CD4-positive, alpha-beta T cell (primary cell): ENCODE measurements at regions of chr19 and their contacts with region 1.

Region 1: DNA sequence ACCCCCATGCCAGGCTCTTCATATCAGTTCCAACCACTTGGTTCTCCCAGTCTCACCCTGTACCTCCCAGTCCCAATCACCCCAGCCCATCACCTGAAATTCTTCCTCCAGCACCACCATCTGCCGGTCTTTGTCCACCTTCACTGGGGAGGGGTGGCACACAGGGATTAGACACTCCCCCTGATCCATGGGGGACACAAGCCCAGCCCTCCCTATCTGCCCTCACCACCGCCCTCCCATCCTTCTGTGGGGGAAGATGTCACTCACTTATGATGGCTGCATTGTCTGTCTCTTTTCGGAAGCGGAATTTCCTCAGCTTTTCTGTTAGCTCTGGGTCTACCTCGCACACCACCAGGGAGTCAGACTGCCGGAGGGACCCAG is 685 bp downstream of the GMFG start:
- DNase-seq: peak in 8 of 14 experiments; percentile 10 to 63 (median 32)
- ATAC-seq: peak; percentile 45
- H3K4me3 ChIP-seq: peak overlapping the region; percentile 99
- H3K4me3 Mint-ChIP-seq: peak overlapping the region; percentile 98
- H3K27ac ChIP-seq: peak overlapping the region; percentile 93 to 94
- H3K27ac Mint-ChIP-seq: peak overlapping the region; percentile 95
- H3K4me1 ChIP-seq: peaks cover 76% of the 10 kb centered on the region
- H3K4me1 Mint-ChIP-seq: peaks cover 65% of the 10 kb centered on the region
- H3K27me3 ChIP-seq: no peaks in the 10 kb centered on the region
- H3K27me3 Mint-ChIP-seq: no peaks in the 10 kb centered on the region
- CTCF ChIP-seq: no peak

Region 2: DNA sequence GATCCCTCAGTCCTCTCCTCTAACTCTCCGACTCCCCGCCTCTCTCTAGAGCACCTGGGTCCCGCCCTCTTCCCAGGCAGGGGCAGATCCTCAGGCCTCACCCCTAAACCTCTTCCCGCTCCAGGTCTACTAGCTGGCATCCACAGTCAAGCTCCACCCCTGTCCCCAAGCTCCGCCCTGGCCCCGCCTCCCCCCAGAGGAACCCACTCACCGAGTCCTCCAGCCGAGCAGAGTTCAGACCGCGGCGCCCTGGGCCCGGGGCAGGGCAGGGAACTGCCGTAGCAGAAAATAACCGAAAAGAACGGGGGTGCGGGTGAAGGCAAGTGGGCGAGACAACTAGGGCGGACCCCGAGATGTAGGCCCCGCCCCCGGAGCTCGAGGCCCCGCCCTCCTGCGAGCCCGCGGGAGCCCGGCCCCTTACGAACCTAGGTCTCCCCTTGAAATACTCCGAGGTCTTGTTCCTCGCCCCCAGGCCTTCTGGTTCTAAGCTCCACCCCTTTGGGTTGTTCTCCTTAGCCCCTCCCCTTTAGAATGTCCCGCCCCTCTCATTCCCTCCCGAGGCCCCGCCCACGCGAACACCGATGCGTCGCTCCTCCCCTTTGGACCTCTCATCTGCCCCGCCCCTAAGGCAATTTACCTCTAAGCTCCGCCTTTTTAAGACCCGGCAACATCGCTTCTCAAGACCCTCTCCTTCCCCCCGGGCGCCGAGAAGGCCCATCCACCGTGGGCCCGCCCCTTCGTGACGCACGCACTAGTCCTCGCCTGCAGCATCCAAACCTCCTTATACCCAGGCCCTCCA is 947.4 kb before region 1 on chr19 and contains the start of gene GGN:
- CTCF ChIA-PET with region 1: no interaction called
- POLR2A ChIA-PET with region 1: no interaction called
- intact Hi-C with region 1: loop called in 1 of 2 experiments (anchors 10 kb)
- DNase-seq: peak; percentile 59 to 91 (median 75)
- ATAC-seq: peak; percentile 74
- H3K4me3 ChIP-seq: peak within 1 kb of the TSS; percentile 58
- H3K4me3 Mint-ChIP-seq: peak within 1 kb of the TSS; percentile 94
- H3K27ac ChIP-seq: no peak within 1 kb of the TSS
- H3K27ac Mint-ChIP-seq: peak within 1 kb of the TSS; percentile 70
- H3K4me1 ChIP-seq: peaks cover 44% of the 10 kb centered on the region
- H3K4me1 Mint-ChIP-seq: peaks cover 29% of the 10 kb centered on the region
- H3K27me3 ChIP-seq: peaks cover 17 to 18% of the 10 kb centered on the region in 2 experiments
- H3K27me3 Mint-ChIP-seq: peaks cover 39% of the 10 kb centered on the region
- CTCF ChIP-seq: no peak
- total RNA-seq, gene GGN: 0.17 to 0.19 TPM

Region 3: DNA sequence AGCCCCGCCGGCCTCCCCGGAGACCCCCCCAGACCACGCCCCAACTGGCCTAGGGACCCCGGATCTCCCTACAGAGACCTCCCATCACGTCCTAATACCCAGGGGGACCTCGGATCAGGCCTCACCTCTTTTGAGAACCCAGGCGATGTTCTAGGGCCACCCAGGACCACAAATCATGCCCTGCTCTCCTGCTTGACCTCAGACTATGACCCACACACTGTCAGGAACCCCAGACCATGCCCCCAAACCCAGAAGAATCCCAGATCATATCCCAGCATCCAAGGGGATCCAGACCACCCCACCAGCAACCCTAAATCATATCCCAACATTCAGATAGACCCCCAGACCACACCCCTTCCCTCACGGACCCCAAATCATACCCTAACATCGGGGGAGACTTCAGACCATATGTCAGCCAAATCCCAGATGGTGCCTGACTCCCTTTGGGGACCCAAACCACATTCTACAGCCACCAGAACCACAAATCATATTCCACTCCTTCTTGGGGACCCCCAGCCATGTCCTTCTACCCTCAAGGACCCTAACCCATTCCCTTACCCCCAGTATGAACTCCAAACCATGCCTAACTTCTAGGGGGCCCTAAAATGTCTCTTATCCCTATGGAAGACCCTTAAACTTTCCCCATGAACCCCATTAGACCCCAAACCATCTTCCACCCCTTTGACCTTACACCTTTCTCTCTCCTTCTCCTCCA is 13.9 kb before region 1 on chr19:
- CTCF ChIA-PET with region 1: no interaction called
- POLR2A ChIA-PET with region 1: interaction called, 17 read pairs
- intact Hi-C with region 1: no loop called
- DNase-seq: no peak
- ATAC-seq: no peak
- H3K4me3 ChIP-seq: no peak overlapping the region
- H3K4me3 Mint-ChIP-seq: peak overlapping the region; percentile 91
- H3K27ac ChIP-seq: peak overlapping the region; percentile 33 to 43
- H3K27ac Mint-ChIP-seq: peak overlapping the region; percentile 83
- H3K4me1 ChIP-seq: peaks cover 18% of the 10 kb centered on the region
- H3K4me1 Mint-ChIP-seq: peaks cover 36% of the 10 kb centered on the region
- H3K27me3 ChIP-seq: no peaks in the 10 kb centered on the region
- H3K27me3 Mint-ChIP-seq: no peaks in the 10 kb centered on the region
- CTCF ChIP-seq: no peak

Region 4: GRCh38 chr19:39352381-39353255 is 17.5 kb after region 1 on chr19:
- CTCF ChIA-PET with region 1: no interaction called
- POLR2A ChIA-PET with region 1: no interaction called
- intact Hi-C with region 1: no loop called
- DNase-seq: no peak
- ATAC-seq: no peak
- H3K4me3 ChIP-seq: no peak overlapping the region
- H3K4me3 Mint-ChIP-seq: no peak overlapping the region
- H3K27ac ChIP-seq: no peak overlapping the region
- H3K27ac Mint-ChIP-seq: no peak overlapping the region
- H3K4me1 ChIP-seq: no peaks in the 10 kb centered on the region
- H3K4me1 Mint-ChIP-seq: peaks cover 30% of the 10 kb centered on the region
- H3K27me3 ChIP-seq: no peaks in the 10 kb centered on the region
- H3K27me3 Mint-ChIP-seq: no peaks in the 10 kb centered on the region
- CTCF ChIP-seq: no peak

Region 5: GRCh38 chr19:39390755-39391592 is 55.8 kb after region 1 on chr19 and contains the starts of genes MED29 and PAF1:
- CTCF ChIA-PET with region 1: no interaction called
- POLR2A ChIA-PET with region 1: interaction called, 20 read pairs
- intact Hi-C with region 1: loop called in 1 of 2 experiments (anchors 2 kb)
- DNase-seq: peak; percentile 91 to 100 (median 94)
- ATAC-seq: peak; percentile 90
- H3K4me3 ChIP-seq: peak within 1 kb of the TSS; percentile 91
- H3K4me3 Mint-ChIP-seq: peak within 1 kb of the TSS; percentile 90
- H3K27ac ChIP-seq: peak within 1 kb of the TSS; percentile 98 to 100
- H3K27ac Mint-ChIP-seq: peak within 1 kb of the TSS; percentile 96
- H3K4me1 ChIP-seq: peaks cover 44% of the 10 kb centered on the region
- H3K4me1 Mint-ChIP-seq: peaks cover 33% of the 10 kb centered on the region
- H3K27me3 ChIP-seq: no peaks in the 10 kb centered on the region
- H3K27me3 Mint-ChIP-seq: no peaks in the 10 kb centered on the region
- CTCF ChIP-seq: no peak
- total RNA-seq, gene MED29: 45.0 to 46.1 TPM
- total RNA-seq, gene PAF1: 99.6 to 101 TPM

Region 6: DNA sequence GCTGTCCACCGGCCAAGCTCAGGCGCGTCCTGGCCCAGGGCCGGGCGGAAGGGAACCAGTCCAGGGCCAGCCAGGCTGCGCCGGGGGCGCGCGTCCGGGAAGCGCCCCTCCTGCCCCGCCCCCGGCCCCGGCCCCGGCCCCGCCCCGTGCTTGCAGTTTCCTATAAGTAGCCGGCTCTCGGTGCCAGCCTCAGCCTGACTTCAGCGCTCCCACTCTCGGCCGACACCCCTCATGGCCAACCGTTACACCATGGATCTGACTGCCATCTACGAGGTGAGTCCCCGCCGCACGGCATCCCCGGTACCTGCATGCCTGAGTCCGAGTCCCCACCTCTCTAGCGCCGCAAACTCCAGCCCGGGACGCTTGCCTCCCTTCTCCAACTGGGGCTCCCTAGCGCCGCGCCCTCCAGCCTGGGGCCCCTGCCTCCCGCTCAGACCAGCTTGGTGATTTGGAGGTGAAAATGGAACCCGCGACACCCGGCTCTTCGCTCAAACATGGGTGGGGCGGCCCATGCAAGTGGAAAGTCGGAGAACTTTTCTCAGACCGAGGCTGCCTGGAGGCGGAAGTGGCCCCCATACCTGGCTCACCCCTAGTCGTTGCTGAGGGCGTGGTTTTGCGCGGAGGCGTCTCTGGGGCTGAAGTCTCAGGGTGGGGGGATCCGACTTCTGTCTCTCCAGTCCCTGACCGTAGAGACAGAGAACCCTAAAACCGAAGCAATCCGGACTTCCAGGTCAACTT is 71.7 kb after region 1 on chr19 and contains the start of gene ZFP36:
- CTCF ChIA-PET with region 1: interaction called, 3 read pairs
- POLR2A ChIA-PET with region 1: interaction called, 14 read pairs
- intact Hi-C with region 1: loop called in 1 of 2 experiments (anchors 2 kb)
- DNase-seq: peak; percentile 80 to 95 (median 91)
- ATAC-seq: peak; percentile 11
- H3K4me3 ChIP-seq: peak within 1 kb of the TSS; percentile 100
- H3K4me3 Mint-ChIP-seq: peak within 1 kb of the TSS; percentile 99
- H3K27ac ChIP-seq: peak within 1 kb of the TSS; percentile 100
- H3K27ac Mint-ChIP-seq: peak within 1 kb of the TSS; percentile 98
- H3K4me1 ChIP-seq: peaks cover 85% of the 10 kb centered on the region
- H3K4me1 Mint-ChIP-seq: peaks cover 56% of the 10 kb centered on the region
- H3K27me3 ChIP-seq: no peaks in the 10 kb centered on the region
- H3K27me3 Mint-ChIP-seq: peaks cover 7% of the 10 kb centered on the region
- CTCF ChIP-seq: no peak
- total RNA-seq, gene ZFP36: 1,278 to 1,362 TPM